BJ (cell line): ENCODE measurements at regions of chr15 and their contacts with region 1.

Region 1: GRCh38 chr15:75201609-75202250 is at the start of gene C15orf39:
- DNase-seq: no peak
- H3K4me3 ChIP-seq: peak within 1 kb of the TSS; percentile 95
- H3K27me3 ChIP-seq: peaks cover 12% of the 10 kb centered on the region
- CTCF ChIP-seq: peak; percentile 29; the same call in 1 of the 2 replicates
- polyA plus RNA-seq, gene C15orf39: 2.5 and 4.5 TPM in 2 replicates

Region 2: GRCh38 chr15:73844356-73844755 is 1357.4 kb before region 1 on chr15:
- CTCF ChIA-PET with region 1: no interaction called
- POLR2A ChIA-PET with region 1: no interaction called
- DNase-seq: no peak
- H3K4me3 ChIP-seq: no peak overlapping the region
- H3K27me3 ChIP-seq: peaks cover 22% of the 10 kb centered on the region
- CTCF ChIP-seq: no peak

Region 3: DNA sequence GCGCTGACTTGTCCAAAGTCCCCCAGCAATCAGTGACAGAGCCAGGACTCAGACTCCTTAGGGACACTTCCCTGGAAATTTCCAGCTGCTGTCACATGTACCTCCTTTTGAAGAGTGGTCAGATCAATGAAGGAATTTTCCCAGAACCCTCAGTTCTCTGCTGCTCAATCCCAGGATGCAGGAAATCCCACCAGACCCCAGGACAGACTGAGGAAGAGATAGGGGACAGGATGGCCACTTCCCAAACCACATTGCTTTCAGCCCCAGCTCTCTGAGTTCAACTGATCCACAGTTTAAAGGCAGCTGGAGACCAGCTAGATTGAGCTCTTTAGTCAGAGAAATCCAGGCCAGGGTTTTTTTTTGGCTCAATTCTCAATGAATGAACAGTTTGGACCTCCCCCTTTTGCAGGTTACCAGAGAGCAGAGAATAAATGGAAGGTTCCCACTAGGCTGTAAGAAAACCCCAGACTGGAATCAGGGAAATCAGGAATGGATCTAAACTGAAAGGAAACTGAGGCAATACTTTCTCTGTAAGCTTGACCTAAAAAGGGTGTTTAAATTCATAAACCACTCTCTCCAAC is 477.9 kb before region 1 on chr15:
- CTCF ChIA-PET with region 1: no interaction called
- POLR2A ChIA-PET with region 1: no interaction called
- DNase-seq: no peak
- H3K4me3 ChIP-seq: no peak overlapping the region
- H3K27me3 ChIP-seq: peaks cover 20% of the 10 kb centered on the region
- CTCF ChIP-seq: no peak

Region 4: GRCh38 chr15:75023181-75023871 is 178.4 kb before region 1 on chr15 and contains the start of gene PPCDC:
- CTCF ChIA-PET with region 1: interaction called, 237 read pairs
- POLR2A ChIA-PET with region 1: no interaction called
- DNase-seq: peak; percentile 51
- H3K4me3 ChIP-seq: peak within 1 kb of the TSS; percentile 99
- H3K27me3 ChIP-seq: no peaks in the 10 kb centered on the region
- CTCF ChIP-seq: no peak
- polyA plus RNA-seq, gene PPCDC: 8.2 and 11.1 TPM in 2 replicates

Region 5: GRCh38 chr15:75029378-75030022 is 172.2 kb before region 1 on chr15:
- CTCF ChIA-PET with region 1: interaction called, 237 read pairs
- POLR2A ChIA-PET with region 1: interaction called, 7 read pairs
- DNase-seq: no peak
- H3K4me3 ChIP-seq: no peak overlapping the region
- H3K27me3 ChIP-seq: no peaks in the 10 kb centered on the region
- CTCF ChIP-seq: peak; percentile 88

Region 6: GRCh38 chr15:75036314-75036649 is 165.4 kb before region 1 on chr15:
- CTCF ChIA-PET with region 1: interaction called, 237 read pairs
- POLR2A ChIA-PET with region 1: no interaction called
- DNase-seq: no peak
- H3K4me3 ChIP-seq: no peak overlapping the region
- H3K27me3 ChIP-seq: no peaks in the 10 kb centered on the region
- CTCF ChIP-seq: no peak

Region 7: GRCh38 chr15:75042730-75043508 is 158.8 kb before region 1 on chr15:
- CTCF ChIA-PET with region 1: interaction called, 40 read pairs
- POLR2A ChIA-PET with region 1: no interaction called
- DNase-seq: no peak
- H3K4me3 ChIP-seq: no peak overlapping the region
- H3K27me3 ChIP-seq: no peaks in the 10 kb centered on the region
- CTCF ChIP-seq: peak; percentile 50

Region 8: DNA sequence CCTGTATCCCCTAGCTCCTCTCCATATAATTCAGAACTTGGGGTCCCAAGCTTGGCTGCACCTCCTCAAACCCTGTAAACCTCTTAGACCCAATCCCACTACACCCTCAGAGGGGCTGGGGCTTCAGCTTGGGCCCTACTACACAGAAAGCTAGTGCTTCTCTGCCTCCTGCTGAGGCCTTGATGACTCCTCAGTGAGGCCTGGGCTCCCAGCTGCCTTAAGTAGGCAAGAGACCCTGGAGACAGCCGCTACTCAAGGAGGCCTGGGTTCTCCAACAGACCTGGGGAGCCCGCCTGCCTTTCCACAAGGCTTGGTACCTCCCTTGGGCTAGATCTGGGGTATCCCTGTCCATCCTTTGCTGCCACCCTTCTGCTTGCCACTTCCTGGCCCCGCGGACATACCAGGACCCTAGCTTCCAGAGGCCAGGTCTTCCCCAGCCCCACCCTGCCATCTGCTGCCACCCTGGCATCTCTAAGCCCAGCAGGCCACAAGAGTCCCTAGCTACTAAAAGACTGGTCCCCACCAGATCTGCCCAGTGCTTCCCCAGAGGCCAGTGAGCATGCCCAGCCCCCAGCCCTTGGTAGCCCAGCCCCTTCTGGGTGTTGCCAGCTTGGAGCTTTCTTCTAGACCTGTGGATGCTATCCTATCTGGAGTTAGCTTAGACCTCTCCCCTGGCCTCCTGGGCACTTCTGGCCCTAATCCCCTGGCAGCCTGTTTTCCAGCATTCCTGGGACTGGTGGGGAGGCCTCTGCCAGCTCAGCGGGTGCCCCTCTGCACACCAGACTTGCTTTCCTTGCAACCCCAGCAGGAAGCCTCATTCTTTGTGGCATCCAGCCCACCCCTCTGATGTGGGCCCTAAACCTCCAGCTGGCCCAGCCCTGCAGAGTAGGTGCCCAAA is 13.6 kb after region 1 on chr15:
- CTCF ChIA-PET with region 1: interaction called, 16 read pairs
- POLR2A ChIA-PET with region 1: no interaction called
- DNase-seq: no peak
- H3K4me3 ChIP-seq: no peak overlapping the region
- H3K27me3 ChIP-seq: no peaks in the 10 kb centered on the region
- CTCF ChIP-seq: no peak